GM12878 (cell line): ENCODE measurements at regions of chr14 and their contacts with region 1.

Region 1: DNA sequence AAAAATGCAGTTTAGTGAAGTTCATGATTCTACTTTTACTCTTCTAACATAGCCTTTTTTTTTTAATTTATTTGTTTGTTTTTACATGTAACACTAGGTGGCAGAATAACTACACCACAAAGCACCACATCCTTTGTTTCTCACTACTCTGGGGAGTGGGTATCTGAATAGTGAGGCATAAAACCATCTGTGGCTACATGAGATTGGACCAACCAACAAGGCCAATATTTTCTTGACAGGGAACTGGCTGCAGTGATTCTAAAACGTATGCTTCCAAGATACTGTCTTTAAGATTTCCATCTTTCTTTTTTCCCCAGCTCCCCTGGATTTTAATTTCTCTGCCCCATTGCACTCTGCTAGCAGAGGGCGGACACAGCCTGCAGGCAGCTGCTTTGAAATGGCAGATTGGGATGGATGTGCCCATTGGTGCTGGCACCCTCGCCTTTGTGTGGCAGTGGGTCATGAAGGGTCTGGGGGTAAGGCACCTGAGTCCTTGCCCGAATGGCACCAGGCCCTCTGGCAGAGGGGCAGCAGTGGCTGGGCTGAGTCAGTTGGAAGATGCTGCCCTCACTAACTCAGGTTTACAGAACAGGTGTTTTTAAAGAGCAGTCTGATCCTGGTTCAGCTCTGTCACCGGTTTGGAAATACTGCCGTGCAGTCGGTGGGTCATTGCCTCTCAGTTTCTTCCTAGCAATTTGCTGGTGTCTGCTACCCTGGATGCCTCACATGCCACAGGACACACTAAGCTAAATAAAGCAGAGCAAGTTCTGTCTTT is 429.1 kb downstream of the RAD51B start:
- DNase-seq: peak; percentile 89
- ATAC-seq: peak; percentile 84
- H3K4me3 ChIP-seq: no peak overlapping the region
- H3K27ac ChIP-seq: peak overlapping the region; percentile 60
- H3K4me1 ChIP-seq: peaks cover 41% of the 10 kb centered on the region
- H3K27me3 ChIP-seq: no peaks in the 10 kb centered on the region
- CTCF ChIP-seq: peak; percentile 33 to 73 (median 45); a peak in 4 of 6 replicates
- EP300 ChIP-seq: no peak
- POLR2A ChIP-seq: no peak
- RAD21 ChIP-seq: peak; percentile 93

Region 2: GRCh38 chr14:66378712-66379505 is 1869.8 kb before region 1 on chr14:
- CTCF ChIA-PET with region 1: no interaction called
- POLR2A ChIA-PET with region 1: no interaction called
- RAD21 ChIA-PET with region 1: no interaction called
- SMC1A ChIA-PET with region 1: no interaction called
- in situ Hi-C with region 1: no loop called
- intact Hi-C with region 1: no loop called
- DNase-seq: no peak
- ATAC-seq: no peak
- H3K4me3 ChIP-seq: no peak overlapping the region
- H3K27ac ChIP-seq: no peak overlapping the region
- H3K4me1 ChIP-seq: no peaks in the 10 kb centered on the region
- H3K27me3 ChIP-seq: no peaks in the 10 kb centered on the region
- CTCF ChIP-seq: no peak
- EP300 ChIP-seq: no peak
- POLR2A ChIP-seq: no peak
- RAD21 ChIP-seq: no peak

Region 3: GRCh38 chr14:68084256-68084655 is 164.4 kb before region 1 on chr14:
- CTCF ChIA-PET with region 1: interaction called, 4 read pairs
- POLR2A ChIA-PET with region 1: no interaction called
- RAD21 ChIA-PET with region 1: no interaction called
- SMC1A ChIA-PET with region 1: interaction called, 12 read pairs
- in situ Hi-C with region 1: no loop called
- intact Hi-C with region 1: no loop called
- DNase-seq: no peak
- ATAC-seq: peak; percentile 69
- H3K4me3 ChIP-seq: no peak overlapping the region
- H3K27ac ChIP-seq: no peak overlapping the region
- H3K4me1 ChIP-seq: no peaks in the 10 kb centered on the region
- H3K27me3 ChIP-seq: no peaks in the 10 kb centered on the region
- CTCF ChIP-seq: peak in 2 of 3 experiments; percentile 30 to 36; a peak in 3 of 6 replicates
- EP300 ChIP-seq: no peak
- POLR2A ChIP-seq: no peak
- RAD21 ChIP-seq: peak; percentile 65

Region 4: GRCh38 chr14:68274725-68275124 is 26.1 kb after region 1 on chr14:
- CTCF ChIA-PET with region 1: interaction called, 158 read pairs
- POLR2A ChIA-PET with region 1: interaction called, 10 read pairs
- RAD21 ChIA-PET with region 1: interaction called, 240 read pairs
- SMC1A ChIA-PET with region 1: interaction called, 237 read pairs
- in situ Hi-C with region 1: no loop called
- intact Hi-C with region 1: loop called (anchors 1 kb)
- DNase-seq: no peak
- ATAC-seq: no peak
- H3K4me3 ChIP-seq: no peak overlapping the region
- H3K27ac ChIP-seq: peak overlapping the region; percentile 91
- H3K4me1 ChIP-seq: peaks cover 78% of the 10 kb centered on the region
- H3K27me3 ChIP-seq: no peaks in the 10 kb centered on the region
- CTCF ChIP-seq: peak in 1 of 3 experiments; percentile 22; a peak in 1 of 6 replicates
- EP300 ChIP-seq: no peak
- POLR2A ChIP-seq: no peak
- RAD21 ChIP-seq: 0 out of 2 replicates have a peak, but pooled peaks have one; percentile 21

Region 5: GRCh38 chr14:68312884-68313610 is 64.4 kb after region 1 on chr14:
- CTCF ChIA-PET with region 1: interaction called, 21 read pairs
- POLR2A ChIA-PET with region 1: interaction called, 8 read pairs
- RAD21 ChIA-PET with region 1: interaction called, 87 read pairs
- SMC1A ChIA-PET with region 1: interaction called, 122 read pairs
- in situ Hi-C with region 1: no loop called
- intact Hi-C with region 1: loop called (anchors 2 kb)
- DNase-seq: peak; percentile 99
- ATAC-seq: peak; percentile 89
- H3K4me3 ChIP-seq: no peak overlapping the region; the same call in 1 of the 2 replicates
- H3K27ac ChIP-seq: peak overlapping the region; percentile 91
- H3K4me1 ChIP-seq: peaks cover 64% of the 10 kb centered on the region
- H3K27me3 ChIP-seq: no peaks in the 10 kb centered on the region
- CTCF ChIP-seq: no peak
- EP300 ChIP-seq: peak; percentile 88 to 97; a peak in 3 of 4 replicates
- POLR2A ChIP-seq: peak; percentile 49; the same call in 1 of the 2 replicates
- RAD21 ChIP-seq: peak; percentile 41

Region 6: DNA sequence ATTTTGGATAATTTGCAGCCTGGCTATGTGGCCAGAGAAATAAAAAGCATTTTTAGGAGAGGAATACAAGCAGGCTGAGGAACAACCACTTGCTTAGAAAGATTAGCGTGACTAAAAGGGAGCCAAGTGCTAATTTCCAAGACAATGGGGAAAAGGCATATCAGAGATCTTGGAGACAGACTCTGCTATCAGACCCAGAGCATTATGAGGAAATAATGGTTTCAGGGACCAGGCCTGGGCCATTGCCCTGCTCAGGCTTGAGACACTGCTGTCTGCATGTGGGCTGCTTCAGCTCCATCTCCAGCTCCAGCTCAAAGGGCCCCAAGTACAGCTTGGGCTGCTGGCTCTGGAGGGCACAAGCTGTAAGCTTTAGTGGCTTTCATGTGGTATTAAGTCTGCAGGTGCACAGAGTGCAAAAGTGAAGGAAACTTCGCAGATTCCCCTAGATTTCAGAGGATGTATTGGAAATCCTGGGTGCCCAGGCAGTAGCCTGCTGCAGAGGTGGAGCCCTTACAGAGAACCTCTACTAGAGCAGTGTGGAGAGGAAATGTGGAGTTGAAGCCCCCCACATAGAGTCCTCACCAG is 95.0 kb after region 1 on chr14:
- CTCF ChIA-PET with region 1: no interaction called
- POLR2A ChIA-PET with region 1: no interaction called
- RAD21 ChIA-PET with region 1: no interaction called
- SMC1A ChIA-PET with region 1: no interaction called
- in situ Hi-C with region 1: no loop called
- intact Hi-C with region 1: no loop called
- DNase-seq: no peak
- ATAC-seq: no peak
- H3K4me3 ChIP-seq: no peak overlapping the region
- H3K27ac ChIP-seq: no peak overlapping the region
- H3K4me1 ChIP-seq: peaks cover 27% of the 10 kb centered on the region
- H3K27me3 ChIP-seq: no peaks in the 10 kb centered on the region
- CTCF ChIP-seq: no peak
- EP300 ChIP-seq: no peak
- POLR2A ChIP-seq: no peak
- RAD21 ChIP-seq: no peak

Region 7: GRCh38 chr14:68495101-68496039 is 246.7 kb after region 1 on chr14:
- CTCF ChIA-PET with region 1: interaction called, 4 read pairs
- POLR2A ChIA-PET with region 1: no interaction called
- RAD21 ChIA-PET with region 1: no interaction called
- SMC1A ChIA-PET with region 1: interaction called, 3 read pairs
- in situ Hi-C with region 1: no loop called
- intact Hi-C with region 1: loop called (anchors 5 kb)
- DNase-seq: peak; percentile 83
- ATAC-seq: peak; percentile 92
- H3K4me3 ChIP-seq: no peak overlapping the region
- H3K27ac ChIP-seq: peak overlapping the region; percentile 68
- H3K4me1 ChIP-seq: peaks cover 24% of the 10 kb centered on the region
- H3K27me3 ChIP-seq: no peaks in the 10 kb centered on the region
- CTCF ChIP-seq: no peak
- EP300 ChIP-seq: peak; percentile 71 to 87; a peak in 2 of 4 replicates
- POLR2A ChIP-seq: no peak
- RAD21 ChIP-seq: 0 out of 2 replicates have a peak, but pooled peaks have one; percentile 8

Region 8: DNA sequence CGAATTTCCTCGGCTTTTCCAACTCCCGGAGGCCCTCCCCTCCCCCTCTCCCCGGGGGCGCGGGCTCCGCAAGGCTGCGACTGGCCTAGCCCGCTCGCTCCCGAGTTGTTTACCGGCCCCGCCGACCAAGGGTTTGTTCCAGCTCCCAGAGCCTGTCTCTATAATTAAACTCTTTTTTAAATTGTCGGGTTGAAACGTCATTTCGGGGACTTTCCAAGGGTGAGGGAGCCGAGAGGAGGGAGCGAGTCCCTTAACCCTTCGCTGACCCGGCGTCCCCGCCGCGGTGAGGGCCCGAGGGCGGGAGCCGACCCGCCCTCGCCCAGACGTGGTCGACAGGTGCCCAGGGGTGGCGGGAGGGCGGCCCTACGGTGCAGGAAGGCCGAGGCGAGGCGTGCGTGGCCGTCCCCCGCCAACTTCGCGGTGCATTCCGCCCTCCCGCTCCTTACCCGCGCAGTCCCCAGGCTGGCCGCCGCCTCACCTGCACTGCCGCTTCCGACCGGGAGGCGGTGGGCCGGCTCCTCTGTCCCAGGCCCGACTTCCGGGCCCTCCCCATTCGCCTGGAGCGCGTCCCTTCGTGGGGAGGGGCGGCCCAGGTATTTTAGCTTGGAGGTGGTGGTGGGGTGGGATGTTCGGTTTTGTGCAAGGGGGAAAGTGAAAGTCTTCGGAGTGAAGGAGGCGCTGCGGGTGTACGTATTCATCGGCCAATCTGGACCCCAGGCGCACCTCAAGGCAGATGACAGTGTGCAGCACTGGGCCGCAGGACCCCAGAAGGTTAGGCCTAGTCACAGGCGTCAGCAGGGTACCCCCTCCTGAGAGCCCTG is 547.1 kb after region 1 on chr14:
- CTCF ChIA-PET with region 1: interaction called, 75 read pairs
- POLR2A ChIA-PET with region 1: interaction called, 4 read pairs
- RAD21 ChIA-PET with region 1: interaction called, 139 read pairs
- SMC1A ChIA-PET with region 1: interaction called, 128 read pairs
- in situ Hi-C with region 1: loop called (anchors 5 kb)
- intact Hi-C with region 1: no loop called
- DNase-seq: no peak
- ATAC-seq: peak; percentile 62
- H3K4me3 ChIP-seq: peak overlapping the region; percentile 97
- H3K27ac ChIP-seq: peak overlapping the region; percentile 100
- H3K4me1 ChIP-seq: peaks cover 18% of the 10 kb centered on the region
- H3K27me3 ChIP-seq: no peaks in the 10 kb centered on the region
- CTCF ChIP-seq: peak; percentile 46 to 74 (median 59); a peak in 5 of 6 replicates
- EP300 ChIP-seq: peak in 1 of 2 experiments; percentile 62; a peak in 3 of 4 replicates
- POLR2A ChIP-seq: peak; percentile 97
- RAD21 ChIP-seq: peak; percentile 43; the same call in 1 of the 2 replicates